GM10248 (cell line): ENCODE measurements at regions of chr3 and their contacts with region 1.

Region 1: DNA sequence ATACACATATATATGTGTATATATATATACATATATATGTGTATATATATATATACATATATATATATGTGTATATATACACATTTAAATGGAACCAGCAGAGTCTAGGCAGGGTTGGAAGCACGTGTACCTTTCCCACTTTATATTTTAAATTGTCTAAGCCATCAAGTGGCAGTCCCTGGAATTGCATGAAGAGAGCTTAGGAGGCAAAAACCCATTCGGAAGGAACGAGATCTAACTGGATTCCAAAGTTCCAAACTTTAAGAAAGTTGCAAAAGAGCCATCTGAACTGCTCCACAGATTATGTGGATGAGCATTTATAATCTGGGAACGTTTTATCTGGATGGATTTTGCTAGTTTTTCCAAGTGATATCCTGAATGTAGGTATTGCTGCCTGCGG is 186.5 kb downstream of the FOXP1 start:
- DNase-seq: no peak
- CTCF ChIP-seq: peak; percentile 51

Region 2: GRCh38 chr3:70090322-70090913 is 1306.6 kb before region 1 on chr3:
- CTCF ChIA-PET with region 1: no interaction called
- POLR2A ChIA-PET with region 1: no interaction called
- DNase-seq: peak; percentile 20
- CTCF ChIP-seq: peak; percentile 53

Region 3: GRCh38 chr3:71360764-71361163 is 36.3 kb before region 1 on chr3:
- CTCF ChIA-PET with region 1: no interaction called
- POLR2A ChIA-PET with region 1: no interaction called
- DNase-seq: peak; percentile 28
- CTCF ChIP-seq: no peak

Region 4: DNA sequence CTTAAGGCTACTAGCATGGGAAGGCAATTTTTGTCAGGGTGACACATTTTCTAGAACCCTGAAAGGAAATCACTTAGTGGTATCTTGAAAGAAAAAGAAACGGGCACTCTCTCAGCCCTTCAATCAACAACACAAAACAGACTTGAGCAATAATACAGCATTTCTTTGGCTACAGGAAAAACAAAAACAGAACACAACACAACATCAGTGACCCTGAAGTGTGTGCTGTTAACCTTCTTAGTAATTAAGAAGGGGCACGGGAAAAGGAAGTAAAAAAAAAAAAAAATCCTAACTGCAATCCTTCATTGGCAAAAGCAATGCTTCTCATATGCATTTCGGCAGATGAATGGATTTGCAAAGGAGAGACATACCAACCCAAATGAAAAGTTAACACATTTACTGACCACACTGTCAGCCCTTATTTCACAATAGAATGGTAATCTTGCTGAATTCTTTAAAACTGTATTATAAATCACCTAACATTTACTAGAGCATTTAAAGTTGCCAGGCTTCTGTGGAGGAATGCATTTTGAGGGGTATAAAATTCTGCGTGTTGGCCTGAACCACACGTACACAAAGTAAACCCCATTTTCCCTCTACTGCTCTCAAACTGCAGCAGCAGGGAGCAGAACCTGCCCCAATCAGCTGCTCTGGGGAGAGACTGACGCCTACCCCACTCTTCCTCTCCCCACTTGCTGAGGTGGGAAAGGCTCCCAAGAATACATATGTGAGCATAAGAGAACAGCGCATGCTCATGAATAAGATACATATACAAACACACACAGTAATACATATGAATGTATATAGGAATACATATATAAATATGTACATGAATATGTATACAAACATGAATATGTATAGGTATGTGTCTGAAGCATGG is 12.0 kb before region 1 on chr3:
- CTCF ChIA-PET with region 1: interaction called, 12 read pairs
- POLR2A ChIA-PET with region 1: no interaction called
- DNase-seq: no peak
- CTCF ChIP-seq: no peak

Region 5: GRCh38 chr3:71406972-71407810 is 10.1 kb after region 1 on chr3:
- CTCF ChIA-PET with region 1: interaction called, 11 read pairs
- POLR2A ChIA-PET with region 1: no interaction called
- DNase-seq: no peak
- CTCF ChIP-seq: no peak